Adrenal gland (tissue), 19 donors: ENCODE measurements at regions of chr4 and their contacts with region 1.

Region 1: GRCh38 chr4:48673537-48673936 is 106.5 kb downstream of the FRYL start:
- DNase-seq: no peak
- H3K4me3 ChIP-seq: no peak overlapping the region
- H3K27ac ChIP-seq: no peak overlapping the region
- H3K4me1 ChIP-seq: peaks cover 0 to 2% of the 10 kb centered on the region in 2 donors
- H3K27me3 ChIP-seq: no peaks in the 10 kb centered on the region
- CTCF ChIP-seq: no peak
- POLR2A ChIP-seq: no peak

Region 2: DNA sequence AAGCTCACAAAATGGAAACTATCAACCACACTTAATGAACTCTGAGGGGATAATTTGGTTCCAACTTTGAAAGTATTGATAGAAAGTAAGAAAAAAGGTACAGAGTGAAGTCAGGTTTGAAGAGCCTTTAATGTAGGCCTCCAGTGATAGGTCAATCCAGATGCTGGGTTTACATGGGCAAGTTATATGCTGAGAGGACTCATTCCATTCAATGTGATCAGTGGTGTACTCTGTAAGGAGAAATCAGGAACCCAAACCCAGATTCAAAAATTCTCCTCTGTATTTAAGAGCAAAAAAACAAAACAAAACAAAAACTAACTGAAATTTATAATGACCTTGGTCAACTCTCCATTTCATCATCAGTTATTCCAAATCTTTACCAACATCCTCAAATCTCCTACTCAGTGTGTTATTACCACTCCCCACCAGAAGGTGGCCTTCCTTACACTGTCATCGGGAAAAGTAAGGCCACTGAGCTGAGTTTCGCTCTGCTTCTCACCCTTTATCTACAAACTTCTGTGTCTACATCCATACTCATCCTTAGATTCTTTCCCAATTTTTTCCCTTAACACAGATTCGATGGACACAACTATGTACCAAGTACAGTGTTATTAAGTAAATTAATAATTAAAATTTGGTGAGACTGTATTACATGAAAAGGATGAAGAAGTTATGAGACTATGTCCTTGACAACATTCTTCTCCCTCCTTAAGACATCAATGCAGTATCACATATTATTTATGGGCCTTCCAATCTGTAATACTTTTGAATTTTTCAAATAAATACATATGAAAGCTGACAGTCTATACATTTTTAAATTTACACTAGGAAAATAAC is 95.2 kb before region 1 on chr4:
- intact Hi-C with region 1: loop called (anchors 5 to 10 kb)
- DNase-seq: peak; percentile 71 to 87 (median 74)
- H3K4me3 ChIP-seq: no peak overlapping the region
- H3K27ac ChIP-seq: no peak overlapping the region
- H3K4me1 ChIP-seq: no peaks in the 10 kb centered on the region
- H3K27me3 ChIP-seq: no peaks in the 10 kb centered on the region
- CTCF ChIP-seq: peak; percentile 71 to 98 (median 93)
- POLR2A ChIP-seq: no peak

Region 3: GRCh38 chr4:48588230-48589097 is 85.1 kb before region 1 on chr4:
- intact Hi-C with region 1: loop called (anchors 5 to 10 kb)
- DNase-seq: no peak
- H3K4me3 ChIP-seq: no peak overlapping the region
- H3K27ac ChIP-seq: no peak overlapping the region
- H3K4me1 ChIP-seq: no peaks in the 10 kb centered on the region
- H3K27me3 ChIP-seq: no peaks in the 10 kb centered on the region
- CTCF ChIP-seq: no peak
- POLR2A ChIP-seq: no peak